CD4-positive, alpha-beta memory T cell (primary cell): ENCODE measurements at regions of chr20 and their contacts with region 1.

Region 1: GRCh38 chr20:29878281-29878741 is 1379.2 kb upstream of the DEFB115 start:
- DNase-seq: no peak
- H3K4me3 ChIP-seq: no peak overlapping the region
- H3K4me3 Mint-ChIP-seq: peak overlapping the region in 4 of 8 donors; percentile 21 to 80 (median 70)
- H3K27ac ChIP-seq: no peak overlapping the region
- H3K27ac Mint-ChIP-seq: no peak overlapping the region
- H3K4me1 ChIP-seq: no peaks in the 10 kb centered on the region
- H3K4me1 Mint-ChIP-seq: peaks cover 0 to 3% (median 0%) of the 10 kb centered on the region in 4 donors
- H3K27me3 ChIP-seq: no peaks in the 10 kb centered on the region
- H3K27me3 Mint-ChIP-seq: no peaks in the 10 kb centered on the region

Region 2: DNA sequence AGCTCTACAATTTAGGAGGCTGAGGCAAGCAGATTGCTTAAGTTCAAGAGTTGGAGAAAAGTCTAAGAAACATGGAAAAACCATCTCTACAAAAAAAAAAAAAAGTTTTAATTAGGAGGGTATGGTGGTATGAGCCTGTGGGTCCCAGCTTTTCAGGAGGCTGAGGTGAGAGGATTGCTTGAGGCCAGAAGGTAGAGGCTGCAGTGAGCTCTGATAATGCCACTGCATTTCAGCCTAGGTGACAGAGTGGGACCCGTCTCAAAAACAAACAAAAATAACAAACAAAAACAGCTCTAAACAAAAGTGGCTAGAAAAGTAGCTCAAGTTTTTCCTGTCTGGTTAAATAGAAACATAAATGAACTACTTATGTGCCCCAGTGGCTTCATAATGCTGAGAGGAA is 754.5 kb before region 1 on chr20:
- CTCF ChIA-PET with region 1: no interaction called
- POLR2A ChIA-PET with region 1: no interaction called
- intact Hi-C with region 1: loop called (anchors 10 kb)
- DNase-seq: no peak
- H3K4me3 ChIP-seq: no peak overlapping the region
- H3K4me3 Mint-ChIP-seq: no peak overlapping the region
- H3K27ac ChIP-seq: no peak overlapping the region
- H3K27ac Mint-ChIP-seq: no peak overlapping the region
- H3K4me1 ChIP-seq: no peaks in the 10 kb centered on the region
- H3K4me1 Mint-ChIP-seq: no peaks in the 10 kb centered on the region
- H3K27me3 ChIP-seq: no peaks in the 10 kb centered on the region
- H3K27me3 Mint-ChIP-seq: no peaks in the 10 kb centered on the region

Region 3: GRCh38 chr20:31760519-31761240 is 1882.4 kb after region 1 on chr20:
- CTCF ChIA-PET with region 1: no interaction called
- POLR2A ChIA-PET with region 1: no interaction called
- intact Hi-C with region 1: no loop called
- DNase-seq: no peak
- H3K4me3 ChIP-seq: no peak overlapping the region
- H3K4me3 Mint-ChIP-seq: no peak overlapping the region
- H3K27ac ChIP-seq: no peak overlapping the region
- H3K27ac Mint-ChIP-seq: peak overlapping the region in 1 of 7 donors; percentile 7
- H3K4me1 ChIP-seq: no peaks in the 10 kb centered on the region
- H3K4me1 Mint-ChIP-seq: peaks cover 0 to 8% (median 3%) of the 10 kb centered on the region in 4 donors
- H3K27me3 ChIP-seq: no peaks in the 10 kb centered on the region
- H3K27me3 Mint-ChIP-seq: no peaks in the 10 kb centered on the region